ENCODE measurements at regions of chr7 and their contacts with region 1.

Region 1: GRCh38 chr7:81926-82756 is 110.2 kb upstream of the FAM20C start:
- DNase-seq: peak; percentile 59
- H3K4me3 ChIP-seq: no peak overlapping the region
- H3K27ac ChIP-seq: no peak overlapping the region
- H3K4me1 ChIP-seq: peaks cover 14 to 19% of the 10 kb centered on the region in 2 experiments; a peak in 3 of 4 replicates
- H3K27me3 ChIP-seq: no peaks in the 10 kb centered on the region
- CTCF ChIP-seq: no peak
- EP300 ChIP-seq: no peak
- RAD21 ChIP-seq: no peak

Region 2: DNA sequence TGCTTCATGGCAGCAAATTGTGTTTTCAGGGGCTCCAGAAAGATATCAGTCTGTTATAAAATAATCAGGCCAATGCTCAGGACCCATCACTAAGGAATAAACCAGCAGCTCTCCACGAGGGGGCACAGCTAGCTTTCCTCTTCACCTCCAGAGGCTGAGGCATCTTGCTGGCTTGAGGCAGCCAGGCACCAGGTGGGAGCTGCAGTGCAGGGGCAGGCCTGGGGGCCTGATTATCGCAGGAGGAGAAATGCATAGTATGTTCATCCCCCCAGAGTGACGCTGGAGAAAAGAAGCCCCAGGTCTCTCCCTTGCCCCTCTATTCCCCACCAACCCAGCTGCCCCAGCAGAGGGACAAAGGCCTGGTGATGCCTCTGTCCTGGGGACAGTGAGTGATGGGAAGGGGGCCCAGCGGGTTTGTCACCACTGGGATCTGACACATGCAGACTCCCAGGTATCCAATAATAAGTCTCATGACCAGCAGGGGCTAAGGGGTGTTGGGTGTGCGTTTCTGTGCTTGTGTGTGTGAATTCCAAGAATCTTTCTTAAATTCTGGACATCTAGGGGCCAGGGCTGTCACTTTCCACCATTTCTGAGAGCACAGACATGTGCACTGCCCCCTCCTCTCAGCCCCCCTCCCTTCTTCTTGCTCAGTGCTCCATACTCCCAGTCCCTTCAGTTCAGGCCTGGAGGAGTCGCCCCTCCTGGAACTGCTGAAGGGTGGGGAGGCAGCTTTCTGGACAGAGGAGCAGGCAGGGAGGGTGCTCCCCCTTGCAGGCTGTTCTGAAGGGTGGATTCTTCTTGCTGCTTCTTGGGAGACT is 17.8 kb before region 1 on chr7:
- CTCF ChIA-PET with region 1: interaction called, 12 read pairs
- POLR2A ChIA-PET with region 1: no interaction called
- DNase-seq: peak; percentile 78
- H3K4me3 ChIP-seq: no peak overlapping the region
- H3K27ac ChIP-seq: no peak overlapping the region
- H3K4me1 ChIP-seq: peaks cover 2 to 9% of the 10 kb centered on the region in 2 experiments; a peak in 1 of 4 replicates
- H3K27me3 ChIP-seq: no peaks in the 10 kb centered on the region
- CTCF ChIP-seq: peak; percentile 72
- EP300 ChIP-seq: no peak
- RAD21 ChIP-seq: peak; percentile 81

Region 3: GRCh38 chr7:305410-306151 is 223.4 kb after region 1 on chr7:
- CTCF ChIA-PET with region 1: no interaction called
- POLR2A ChIA-PET with region 1: no interaction called
- DNase-seq: peak; percentile 44
- H3K4me3 ChIP-seq: no peak overlapping the region
- H3K27ac ChIP-seq: no peak overlapping the region
- H3K4me1 ChIP-seq: no peaks in the 10 kb centered on the region
- H3K27me3 ChIP-seq: peaks cover 18% of the 10 kb centered on the region
- CTCF ChIP-seq: no peak
- EP300 ChIP-seq: no peak
- RAD21 ChIP-seq: no peak

Measured in SK-N-SH (cell line).